ENCODE measurements at regions of chr2 and their contacts with region 1.

Region 1: GRCh38 chr2:35503715-35504180 is 851.8 kb upstream of the CRIM1 start:
- DNase-seq: no peak
- ATAC-seq: no peak
- H3K4me3 ChIP-seq: no peak overlapping the region
- H3K27ac ChIP-seq: no peak overlapping the region
- H3K4me1 ChIP-seq: no peaks in the 10 kb centered on the region
- H3K27me3 ChIP-seq: no peaks in the 10 kb centered on the region
- CTCF ChIP-seq: no peak
- EP300 ChIP-seq: no peak
- POLR2A ChIP-seq: no peak
- RAD21 ChIP-seq: no peak

Region 2: GRCh38 chr2:33859811-33860461 is 1643.8 kb before region 1 on chr2:
- CTCF ChIA-PET with region 1: no interaction called
- POLR2A ChIA-PET with region 1: no interaction called
- in situ Hi-C with region 1: no loop called
- intact Hi-C with region 1: loop called (anchors 10 kb)
- DNase-seq: no peak
- ATAC-seq: no peak
- H3K4me3 ChIP-seq: no peak overlapping the region
- H3K27ac ChIP-seq: no peak overlapping the region
- H3K4me1 ChIP-seq: no peaks in the 10 kb centered on the region
- H3K27me3 ChIP-seq: no peaks in the 10 kb centered on the region
- CTCF ChIP-seq: no peak
- EP300 ChIP-seq: no peak
- POLR2A ChIP-seq: no peak
- RAD21 ChIP-seq: no peak

Region 3: DNA sequence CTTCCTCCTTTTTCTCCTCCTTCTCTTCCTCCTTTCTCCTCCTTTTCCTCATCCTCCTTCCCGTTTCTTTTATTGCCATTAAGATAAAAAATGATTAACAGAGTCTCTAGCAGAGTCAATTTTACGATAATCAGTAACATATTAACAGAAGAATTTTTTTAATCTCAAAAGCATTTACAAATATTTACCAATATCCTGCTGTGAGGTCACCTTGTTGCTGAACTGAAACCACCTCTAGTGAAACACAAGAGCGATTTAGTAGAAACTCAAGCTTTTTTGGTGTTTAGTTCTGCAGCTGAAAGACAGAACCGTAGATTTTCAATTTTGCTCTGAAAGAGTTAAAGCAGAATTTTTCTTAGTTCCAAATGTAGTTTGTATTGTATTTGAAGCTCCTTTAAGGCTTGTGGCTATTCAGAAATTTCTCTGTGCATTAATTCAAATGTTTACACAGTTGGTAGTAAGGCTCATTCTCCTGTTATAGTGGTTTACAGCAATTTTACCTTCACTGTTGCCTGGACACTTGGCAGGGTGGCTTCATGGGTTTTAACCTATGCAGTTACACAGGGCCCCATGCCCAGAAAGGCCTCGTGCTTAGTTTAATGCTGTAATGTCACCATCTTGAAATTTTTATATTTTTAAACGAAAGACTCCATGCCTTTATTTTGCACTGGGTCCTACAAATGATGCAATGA is 798.0 kb before region 1 on chr2:
- CTCF ChIA-PET with region 1: no interaction called
- POLR2A ChIA-PET with region 1: no interaction called
- in situ Hi-C with region 1: no loop called
- intact Hi-C with region 1: no loop called
- DNase-seq: no peak
- ATAC-seq: no peak
- H3K4me3 ChIP-seq: no peak overlapping the region
- H3K27ac ChIP-seq: no peak overlapping the region
- H3K4me1 ChIP-seq: no peaks in the 10 kb centered on the region
- H3K27me3 ChIP-seq: no peaks in the 10 kb centered on the region
- CTCF ChIP-seq: no peak
- EP300 ChIP-seq: no peak
- POLR2A ChIP-seq: no peak
- RAD21 ChIP-seq: no peak

Region 4: GRCh38 chr2:35125278-35125677 is 378.5 kb before region 1 on chr2:
- CTCF ChIA-PET with region 1: no interaction called
- POLR2A ChIA-PET with region 1: no interaction called
- in situ Hi-C with region 1: no loop called
- intact Hi-C with region 1: no loop called
- DNase-seq: no peak
- ATAC-seq: no peak
- H3K4me3 ChIP-seq: no peak overlapping the region
- H3K27ac ChIP-seq: no peak overlapping the region
- H3K4me1 ChIP-seq: no peaks in the 10 kb centered on the region
- H3K27me3 ChIP-seq: no peaks in the 10 kb centered on the region
- CTCF ChIP-seq: no peak
- EP300 ChIP-seq: no peak
- POLR2A ChIP-seq: no peak
- RAD21 ChIP-seq: no peak

Region 5: GRCh38 chr2:35606394-35606793 is 102.6 kb after region 1 on chr2:
- CTCF ChIA-PET with region 1: no interaction called
- POLR2A ChIA-PET with region 1: no interaction called
- in situ Hi-C with region 1: no loop called
- intact Hi-C with region 1: no loop called
- DNase-seq: no peak
- ATAC-seq: no peak
- H3K4me3 ChIP-seq: no peak overlapping the region
- H3K27ac ChIP-seq: no peak overlapping the region
- H3K4me1 ChIP-seq: no peaks in the 10 kb centered on the region
- H3K27me3 ChIP-seq: no peaks in the 10 kb centered on the region
- CTCF ChIP-seq: no peak
- EP300 ChIP-seq: no peak
- POLR2A ChIP-seq: no peak
- RAD21 ChIP-seq: no peak